GM10248 (cell line): ENCODE measurements at regions of chr12 and their contacts with region 1.

Region 1: DNA sequence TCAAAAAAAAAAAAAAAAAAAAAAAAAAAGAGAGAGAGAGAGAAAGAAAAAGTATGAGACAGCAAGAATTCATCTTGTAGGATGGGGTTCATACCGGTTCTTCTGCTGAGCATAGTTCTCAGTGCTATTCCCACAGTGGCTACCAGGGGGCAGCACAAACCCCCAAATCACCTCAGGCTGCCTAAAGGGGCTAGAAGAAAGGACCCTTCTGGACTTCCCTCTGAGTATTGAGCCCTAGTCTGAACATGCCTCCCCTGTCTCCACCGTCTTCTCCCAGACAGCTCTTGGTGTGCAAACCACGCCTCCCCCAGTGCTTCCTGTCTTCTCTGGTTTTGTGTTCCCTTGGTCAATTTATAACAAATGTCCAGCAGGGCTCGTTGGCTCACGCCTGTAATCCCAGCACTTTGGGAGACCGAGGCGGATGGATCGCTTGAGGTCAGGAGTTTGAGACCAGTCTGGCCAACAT is 31.3 kb upstream of the SMUG1 start:
- DNase-seq: peak; percentile 69
- CTCF ChIP-seq: peak; percentile 89

Region 2: GRCh38 chr12:54368709-54369583 is 148.8 kb after region 1 on chr12:
- CTCF ChIA-PET with region 1: interaction called, 60 read pairs
- POLR2A ChIA-PET with region 1: no interaction called
- DNase-seq: peak; percentile 82
- CTCF ChIP-seq: peak; percentile 96